ENCODE measurements at regions of chr1 and their contacts with region 1.

Region 1: GRCh38 chr1:71857862-71858261 is 424.5 kb downstream of the NEGR1 start:
- DNase-seq: no peak
- ATAC-seq: no peak
- H3K4me3 ChIP-seq: no peak overlapping the region
- H3K27ac ChIP-seq: no peak overlapping the region
- H3K4me1 ChIP-seq: no peaks in the 10 kb centered on the region
- H3K27me3 ChIP-seq: no peaks in the 10 kb centered on the region
- CTCF ChIP-seq: no peak

Region 2: DNA sequence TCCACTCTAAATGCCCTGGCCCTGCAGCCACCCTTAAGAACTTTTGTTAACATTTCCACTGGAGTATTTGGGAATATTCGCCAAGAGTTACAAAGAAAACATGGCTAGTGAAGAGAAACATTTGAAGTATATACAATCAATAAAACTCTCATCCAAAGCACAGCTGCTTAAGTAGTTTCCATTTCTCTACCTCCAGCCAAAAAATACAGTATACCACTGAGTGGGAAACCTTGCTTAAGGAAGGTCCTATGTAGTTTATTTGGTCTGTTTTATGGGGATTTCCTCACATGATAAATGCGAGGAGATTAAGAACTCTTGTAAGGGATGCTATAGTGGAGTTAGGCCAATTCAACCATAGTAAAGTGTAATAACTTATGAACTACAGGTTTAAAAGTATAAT is 42.0 kb after region 1 on chr1:
- CTCF ChIA-PET with region 1: no interaction called
- POLR2A ChIA-PET with region 1: no interaction called
- in situ Hi-C with region 1: no loop called
- intact Hi-C with region 1: no loop called
- DNase-seq: no peak
- ATAC-seq: no peak
- H3K4me3 ChIP-seq: no peak overlapping the region
- H3K27ac ChIP-seq: no peak overlapping the region
- H3K4me1 ChIP-seq: no peaks in the 10 kb centered on the region
- H3K27me3 ChIP-seq: no peaks in the 10 kb centered on the region
- CTCF ChIP-seq: no peak

Region 3: GRCh38 chr1:71948561-71948960 is 90.7 kb after region 1 on chr1:
- CTCF ChIA-PET with region 1: no interaction called
- POLR2A ChIA-PET with region 1: no interaction called
- in situ Hi-C with region 1: no loop called
- intact Hi-C with region 1: no loop called
- DNase-seq: no peak
- ATAC-seq: no peak
- H3K4me3 ChIP-seq: no peak overlapping the region
- H3K27ac ChIP-seq: no peak overlapping the region
- H3K4me1 ChIP-seq: no peaks in the 10 kb centered on the region
- H3K27me3 ChIP-seq: no peaks in the 10 kb centered on the region
- CTCF ChIP-seq: no peak

Region 4: DNA sequence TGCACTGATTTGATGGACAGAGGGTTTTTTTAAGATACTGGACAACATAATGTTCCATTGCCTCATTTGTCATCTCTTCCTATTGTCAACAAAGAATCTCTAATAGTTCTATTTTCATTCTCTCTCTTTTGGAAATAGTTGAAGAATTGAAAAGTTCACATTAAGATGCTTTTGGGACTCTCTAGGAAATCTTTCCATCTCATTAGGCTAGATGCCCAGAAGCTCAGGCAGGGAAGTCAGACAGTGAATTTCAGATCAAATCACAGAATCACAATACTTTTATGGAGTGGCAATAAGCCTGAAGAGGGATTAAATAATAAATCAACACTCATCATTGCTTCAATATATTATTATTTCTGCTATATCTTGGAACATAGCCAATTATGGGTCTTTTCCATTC is 395.3 kb after region 1 on chr1:
- CTCF ChIA-PET with region 1: no interaction called
- POLR2A ChIA-PET with region 1: interaction called, 15 read pairs
- in situ Hi-C with region 1: no loop called
- intact Hi-C with region 1: no loop called
- DNase-seq: no peak
- ATAC-seq: no peak
- H3K4me3 ChIP-seq: no peak overlapping the region
- H3K27ac ChIP-seq: no peak overlapping the region
- H3K4me1 ChIP-seq: no peaks in the 10 kb centered on the region
- H3K27me3 ChIP-seq: no peaks in the 10 kb centered on the region
- CTCF ChIP-seq: no peak

Measured in Panc1 (cell line).